ENCODE measurements at regions of chr10 and their contacts with region 1.

Region 1: DNA sequence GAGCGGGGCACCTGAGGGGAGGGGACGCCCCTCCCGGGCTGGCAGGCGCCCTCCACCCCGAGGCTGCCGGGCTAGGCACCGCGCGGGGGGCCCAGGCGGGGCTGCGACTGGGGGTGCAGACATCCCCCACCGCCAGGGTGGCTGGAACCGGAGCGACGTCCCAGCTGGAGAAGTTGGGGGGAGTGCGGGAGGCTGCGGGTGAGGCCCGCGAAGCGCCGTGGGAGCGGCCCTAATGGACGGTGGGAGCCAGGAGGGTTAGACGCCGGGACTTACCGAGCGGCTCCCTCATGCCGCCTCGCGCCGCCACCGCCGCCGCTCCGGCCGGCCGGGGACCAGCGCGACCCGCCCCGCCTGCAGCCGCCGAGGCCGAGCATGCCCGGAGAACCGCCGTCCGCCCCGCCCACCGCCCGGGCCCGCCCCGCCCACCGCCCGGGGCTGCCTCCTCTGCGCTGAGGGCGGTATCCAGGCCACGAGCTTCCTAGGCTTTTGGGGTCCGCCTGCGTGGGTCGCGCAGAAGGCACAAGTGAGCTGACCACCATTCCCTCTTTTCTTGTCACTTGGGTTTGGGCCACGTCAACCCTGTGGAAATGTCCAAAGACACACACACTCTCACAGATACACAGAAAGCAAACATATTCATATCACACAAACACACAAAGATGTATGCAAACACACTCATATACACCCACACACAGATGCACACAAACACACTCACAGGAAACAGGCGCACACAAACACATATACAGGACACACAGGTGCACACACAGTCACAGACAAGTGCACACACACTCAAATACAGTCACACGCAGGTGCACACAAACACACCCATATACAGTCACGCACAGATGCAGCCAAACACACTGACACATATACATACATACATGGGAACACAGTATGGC is at the start of gene JCAD:
- DNase-seq: no peak
- ATAC-seq: peak; percentile 82
- H3K4me3 ChIP-seq: peak within 1 kb of the TSS; percentile 99
- H3K27ac ChIP-seq: peak within 1 kb of the TSS; percentile 99
- H3K4me1 ChIP-seq: peaks cover 17% of the 10 kb centered on the region
- H3K27me3 ChIP-seq: no peaks in the 10 kb centered on the region
- CTCF ChIP-seq: no peak
- POLR2A ChIP-seq: no peak
- RAD21 ChIP-seq: no peak
- total RNA-seq, gene JCAD: 16.8 and 18.9 TPM in 2 replicates

Region 2: DNA sequence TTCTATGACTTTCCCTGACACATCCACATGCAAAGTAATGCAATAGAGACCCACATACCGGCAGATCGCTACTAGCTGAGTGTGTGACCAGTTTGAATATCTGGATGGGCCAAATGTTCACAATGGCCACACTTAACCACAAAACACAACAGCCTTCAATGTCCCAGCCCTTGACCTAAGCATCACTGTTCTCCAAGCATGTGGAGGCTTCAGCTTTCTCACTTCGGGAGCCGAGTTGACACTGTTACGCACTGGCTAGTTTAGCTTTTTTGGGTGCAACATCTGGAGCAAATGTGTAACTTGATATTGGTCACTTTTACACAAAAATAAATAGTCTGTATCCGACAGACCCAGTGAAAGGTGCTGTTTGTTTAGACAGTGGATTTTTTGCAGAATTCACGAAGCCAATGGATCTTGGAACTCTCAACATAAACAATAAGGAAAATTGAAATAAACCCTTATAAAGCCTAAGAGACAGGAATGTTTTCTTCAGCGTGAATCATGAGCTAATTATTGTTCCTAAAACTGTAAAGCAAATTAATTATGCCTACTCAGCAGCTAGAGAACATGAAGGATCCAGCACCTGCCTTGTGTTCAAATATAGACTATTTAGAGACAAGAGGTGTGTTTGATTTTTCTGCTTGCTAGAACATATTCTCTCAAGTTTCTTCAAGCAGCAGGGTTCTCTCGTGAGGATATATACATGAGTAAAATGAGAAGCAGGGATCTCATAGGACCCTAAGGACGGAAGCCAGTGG is 117.5 kb after region 1 on chr10:
- CTCF ChIA-PET with region 1: no interaction called
- POLR2A ChIA-PET with region 1: no interaction called
- dilution Hi-C with region 1: no loop called
- in situ Hi-C with region 1: no loop called
- intact Hi-C with region 1: loop called (anchors 1 kb)
- DNase-seq: peak; percentile 50
- ATAC-seq: peak; percentile 55
- H3K4me3 ChIP-seq: no peak overlapping the region
- H3K27ac ChIP-seq: peak overlapping the region; percentile 89; the same call in 1 of the 2 replicates
- H3K4me1 ChIP-seq: peaks cover 21% of the 10 kb centered on the region
- H3K27me3 ChIP-seq: no peaks in the 10 kb centered on the region
- CTCF ChIP-seq: no peak
- POLR2A ChIP-seq: no peak
- RAD21 ChIP-seq: no peak

Region 3: DNA sequence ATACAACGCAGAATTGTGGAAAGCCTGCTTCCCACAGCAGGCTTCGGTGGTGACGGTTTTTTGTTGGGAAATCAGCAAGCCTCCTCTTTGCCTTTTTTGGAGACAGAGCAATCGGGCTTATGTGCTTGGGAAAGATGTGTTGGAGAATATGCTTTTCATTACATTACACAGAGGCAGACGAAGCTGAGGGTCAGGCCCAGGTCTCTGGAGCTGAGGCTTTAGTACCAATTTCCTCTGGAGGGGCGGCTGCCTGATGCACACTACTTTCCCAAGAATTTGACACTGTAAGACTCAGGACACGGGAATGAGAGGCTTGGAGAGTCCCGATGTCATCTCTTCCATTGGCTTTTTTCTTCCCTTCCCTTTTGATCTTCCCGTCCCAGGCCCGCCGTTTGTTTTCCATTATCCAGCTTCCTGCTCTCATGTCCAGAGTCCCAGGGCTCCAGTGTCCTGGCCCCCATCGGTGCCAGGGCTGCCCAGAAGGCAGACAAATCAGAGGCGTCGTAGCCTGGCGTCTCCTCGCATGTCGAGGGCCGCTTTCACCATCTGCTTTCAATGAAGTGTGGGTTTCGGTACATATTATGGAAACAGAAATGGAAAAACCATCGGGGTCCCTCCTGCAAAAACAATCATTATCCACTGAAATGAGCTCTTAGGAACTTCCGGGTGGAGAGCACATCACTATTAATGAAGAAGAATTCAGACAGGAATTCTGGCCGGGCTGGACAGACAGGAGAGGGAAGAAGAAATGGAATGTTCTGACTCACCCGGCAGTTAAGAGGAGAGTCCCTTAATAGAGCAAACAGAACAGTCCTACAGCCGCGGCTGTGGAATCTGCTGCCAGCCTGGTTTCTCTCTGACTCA is 123.0 kb after region 1 on chr10:
- CTCF ChIA-PET with region 1: no interaction called
- POLR2A ChIA-PET with region 1: no interaction called
- dilution Hi-C with region 1: no loop called
- in situ Hi-C with region 1: no loop called
- intact Hi-C with region 1: loop called (anchors 1 kb)
- DNase-seq: peak; percentile 90
- ATAC-seq: peak; percentile 84
- H3K4me3 ChIP-seq: no peak overlapping the region
- H3K27ac ChIP-seq: peak overlapping the region; percentile 92
- H3K4me1 ChIP-seq: peaks cover 42% of the 10 kb centered on the region
- H3K27me3 ChIP-seq: no peaks in the 10 kb centered on the region
- CTCF ChIP-seq: no peak
- POLR2A ChIP-seq: no peak
- RAD21 ChIP-seq: peak; percentile 7; the same call in 1 of the 2 replicates

Region 4: DNA sequence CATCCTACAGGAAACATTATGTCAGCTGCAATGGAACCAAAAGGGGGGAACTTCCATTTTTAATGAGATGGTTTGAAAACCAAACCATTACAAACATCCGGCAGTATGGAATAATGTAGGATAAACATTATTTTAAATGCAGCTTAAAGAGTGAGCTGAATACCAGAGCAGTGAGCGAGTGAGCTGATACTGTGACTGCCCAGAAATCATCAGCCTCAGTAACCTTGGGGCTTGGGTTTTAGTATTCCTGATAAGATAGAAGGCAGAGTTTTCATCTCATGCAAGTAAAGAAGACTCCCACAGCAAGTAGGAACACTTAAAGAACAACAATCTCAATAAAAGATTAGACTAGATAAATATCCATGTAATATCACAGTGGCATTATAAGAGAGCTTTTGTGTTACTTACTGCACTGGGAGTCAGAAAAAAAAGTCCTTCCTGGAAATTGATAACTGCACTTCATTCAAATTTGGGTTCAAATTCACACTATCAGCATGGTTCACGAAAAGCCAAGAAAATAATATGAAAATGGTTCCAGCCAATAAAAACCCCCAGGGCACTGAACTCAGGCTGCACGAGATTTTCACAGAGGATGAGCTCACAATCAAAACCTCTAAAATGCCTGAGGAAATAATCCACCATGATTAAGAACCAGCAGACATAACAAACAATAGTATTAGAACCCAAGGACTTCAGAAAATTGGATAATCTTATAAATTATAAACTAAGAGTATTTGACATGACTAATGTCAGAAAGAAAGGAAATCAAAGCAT is 173.9 kb after region 1 on chr10:
- CTCF ChIA-PET with region 1: no interaction called
- POLR2A ChIA-PET with region 1: no interaction called
- dilution Hi-C with region 1: no loop called
- in situ Hi-C with region 1: no loop called
- intact Hi-C with region 1: loop called (anchors 2 kb)
- DNase-seq: peak; percentile 56
- ATAC-seq: peak; percentile 91
- H3K4me3 ChIP-seq: no peak overlapping the region
- H3K27ac ChIP-seq: no peak overlapping the region
- H3K4me1 ChIP-seq: peaks cover 4% of the 10 kb centered on the region
- H3K27me3 ChIP-seq: no peaks in the 10 kb centered on the region
- CTCF ChIP-seq: no peak
- POLR2A ChIP-seq: no peak
- RAD21 ChIP-seq: no peak; the same call in 1 of the 2 replicates

Region 5: DNA sequence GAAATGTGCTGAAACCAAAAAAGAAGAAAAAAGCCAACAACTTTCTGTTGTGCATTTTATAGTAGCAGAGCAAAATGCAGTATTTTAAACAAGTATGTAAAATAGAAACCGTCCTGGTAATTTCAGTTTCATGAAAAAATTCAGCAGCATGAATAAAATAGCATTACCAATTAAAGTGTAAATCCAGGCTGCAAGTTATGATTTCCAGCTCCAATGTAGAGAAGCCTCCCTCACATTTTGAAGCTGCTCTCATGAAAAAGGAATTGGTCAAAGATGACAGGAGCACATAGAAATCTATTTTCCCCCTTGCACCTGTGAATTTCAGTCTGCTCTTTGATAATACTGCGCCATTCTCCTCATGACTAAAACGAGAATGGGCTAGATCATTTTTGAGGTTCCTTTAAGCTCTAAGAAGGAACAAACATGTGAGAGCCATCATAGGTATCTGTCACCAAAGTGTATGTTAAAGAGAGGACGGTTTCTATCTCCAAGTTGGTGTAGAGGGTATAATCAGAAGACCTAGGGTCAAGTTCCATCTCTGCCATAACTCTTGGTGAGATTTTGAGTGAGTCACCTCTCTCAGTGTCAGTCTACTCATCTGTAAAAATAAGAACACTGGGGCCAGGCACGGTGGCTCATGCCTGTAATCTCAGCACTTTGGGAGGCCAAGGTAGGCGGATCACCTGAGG is 182.1 kb after region 1 on chr10:
- CTCF ChIA-PET with region 1: no interaction called
- POLR2A ChIA-PET with region 1: no interaction called
- dilution Hi-C with region 1: no loop called
- in situ Hi-C with region 1: no loop called
- intact Hi-C with region 1: loop called (anchors 1 kb)
- DNase-seq: no peak
- ATAC-seq: no peak
- H3K4me3 ChIP-seq: no peak overlapping the region
- H3K27ac ChIP-seq: no peak overlapping the region
- H3K4me1 ChIP-seq: no peaks in the 10 kb centered on the region; the same call in 1 of the 2 replicates
- H3K27me3 ChIP-seq: no peaks in the 10 kb centered on the region
- CTCF ChIP-seq: no peak
- POLR2A ChIP-seq: no peak
- RAD21 ChIP-seq: no peak

Region 6: GRCh38 chr10:30254926-30255325 is 195.5 kb after region 1 on chr10:
- CTCF ChIA-PET with region 1: no interaction called
- POLR2A ChIA-PET with region 1: no interaction called
- dilution Hi-C with region 1: no loop called
- in situ Hi-C with region 1: no loop called
- intact Hi-C with region 1: no loop called
- DNase-seq: no peak
- ATAC-seq: no peak
- H3K4me3 ChIP-seq: no peak overlapping the region
- H3K27ac ChIP-seq: no peak overlapping the region
- H3K4me1 ChIP-seq: no peaks in the 10 kb centered on the region
- H3K27me3 ChIP-seq: peaks cover 5% of the 10 kb centered on the region; the same call in 1 of the 2 replicates
- CTCF ChIP-seq: no peak
- POLR2A ChIP-seq: no peak
- RAD21 ChIP-seq: no peak

Region 7: GRCh38 chr10:30348378-30348776 is 288.9 kb after region 1 on chr10:
- CTCF ChIA-PET with region 1: no interaction called
- POLR2A ChIA-PET with region 1: no interaction called
- dilution Hi-C with region 1: no loop called
- in situ Hi-C with region 1: no loop called
- intact Hi-C with region 1: loop called (anchors 1 kb)
- DNase-seq: peak; percentile 2
- ATAC-seq: peak; percentile 33
- H3K4me3 ChIP-seq: peak overlapping the region; percentile 97
- H3K27ac ChIP-seq: peak overlapping the region; percentile 99
- H3K4me1 ChIP-seq: peaks cover 2% of the 10 kb centered on the region
- H3K27me3 ChIP-seq: no peaks in the 10 kb centered on the region
- CTCF ChIP-seq: no peak
- POLR2A ChIP-seq: no peak
- RAD21 ChIP-seq: no peak

Measured in IMR-90 (cell line).